Activated T-helper 1 cell treated with anti-CD3 and anti-CD28 coated beads, Interleukin-12 subunit alpha, Interleukin-12 subunit beta, Interleukin-2, Interleukin-4 antibody, amounts not matched to agents 30 ng/mL and 10 ng/mL and 1 ng/mL, durations not matched to agents 14 hours and 24 hours and 36 hours (primary cell): ENCODE measurements at regions of chr5 and their contacts with region 1.

Region 1: DNA sequence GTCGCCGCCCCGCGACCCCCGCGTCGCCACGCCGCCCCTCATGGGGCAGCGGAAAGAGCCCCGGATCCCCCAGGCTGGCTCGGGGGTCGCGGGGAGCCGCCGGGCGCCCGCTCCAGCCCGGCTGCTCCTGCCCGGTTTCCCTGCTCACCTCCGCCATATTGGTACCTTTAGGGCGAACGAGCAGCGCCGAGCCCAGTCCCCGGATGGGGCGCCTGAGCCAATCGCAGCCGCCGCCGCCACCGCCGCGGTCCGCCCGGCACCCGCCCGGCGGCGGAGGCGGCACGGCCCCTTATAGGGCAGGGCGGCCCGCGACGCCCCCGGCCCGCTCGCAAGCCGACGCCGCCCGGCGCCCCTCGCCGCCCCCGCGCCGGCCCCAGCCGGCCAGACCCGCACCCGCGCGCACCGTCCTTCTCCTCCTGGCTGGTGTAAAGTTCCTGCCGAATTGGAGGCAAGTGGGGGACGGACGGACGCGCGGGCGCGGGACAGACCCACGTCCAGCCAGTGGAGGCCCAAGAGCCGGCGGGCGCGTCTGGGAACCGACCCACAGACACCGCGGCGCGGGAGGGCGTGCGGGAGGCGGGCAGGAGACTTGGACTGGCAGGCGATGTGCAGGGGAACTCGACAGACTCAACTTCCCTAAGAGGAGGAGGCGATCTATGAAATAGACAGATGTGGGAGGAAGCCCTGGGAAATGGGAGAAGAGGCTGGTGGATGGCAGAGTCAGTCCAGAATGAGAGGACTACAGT is at the start of gene MIER3:
- DNase-seq: peak; percentile 82
- H3K4me3 Mint-ChIP-seq: peak within 1 kb of the TSS; percentile 95
- H3K27ac Mint-ChIP-seq: peak within 1 kb of the TSS; percentile 45
- H3K4me1 Mint-ChIP-seq: peaks cover 23% of the 10 kb centered on the region
- H3K27me3 Mint-ChIP-seq: peaks cover 24% of the 10 kb centered on the region
- total RNA-seq, gene MIER3: 33.6 and 35.9 TPM in 2 replicates

Region 2: GRCh38 chr5:56962286-56962685 is 10.2 kb after region 1 on chr5:
- intact Hi-C with region 1: no loop called
- DNase-seq: no peak
- H3K4me3 Mint-ChIP-seq: no peak overlapping the region
- H3K27ac Mint-ChIP-seq: no peak overlapping the region
- H3K4me1 Mint-ChIP-seq: no peaks in the 10 kb centered on the region
- H3K27me3 Mint-ChIP-seq: peaks cover 67% of the 10 kb centered on the region

Region 3: DNA sequence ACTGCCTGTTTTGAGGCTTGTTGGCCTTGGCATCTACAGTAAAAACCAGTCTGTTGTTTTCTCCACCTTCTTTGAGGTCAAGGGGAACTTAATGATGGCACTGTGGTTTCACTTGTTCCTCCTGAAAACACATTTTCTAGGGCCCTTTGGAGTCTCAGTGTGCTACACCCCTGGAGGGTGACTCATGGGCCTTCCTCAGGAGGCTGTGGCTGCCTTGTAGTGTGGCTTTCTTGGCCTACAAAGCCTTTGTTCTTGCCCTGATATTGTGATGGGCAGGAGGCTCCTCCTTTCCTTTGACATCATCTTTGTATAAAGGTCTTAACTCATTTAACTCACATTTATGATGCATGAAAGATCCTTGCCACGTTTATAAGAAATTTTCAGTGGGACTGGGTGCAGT is 165.5 kb after region 1 on chr5:
- intact Hi-C with region 1: loop called (anchors 5 kb)
- DNase-seq: peak; percentile 70
- H3K4me3 Mint-ChIP-seq: peak overlapping the region; percentile 54
- H3K27ac Mint-ChIP-seq: peak overlapping the region; percentile 81
- H3K4me1 Mint-ChIP-seq: peaks cover 23% of the 10 kb centered on the region
- H3K27me3 Mint-ChIP-seq: no peaks in the 10 kb centered on the region

Region 4: DNA sequence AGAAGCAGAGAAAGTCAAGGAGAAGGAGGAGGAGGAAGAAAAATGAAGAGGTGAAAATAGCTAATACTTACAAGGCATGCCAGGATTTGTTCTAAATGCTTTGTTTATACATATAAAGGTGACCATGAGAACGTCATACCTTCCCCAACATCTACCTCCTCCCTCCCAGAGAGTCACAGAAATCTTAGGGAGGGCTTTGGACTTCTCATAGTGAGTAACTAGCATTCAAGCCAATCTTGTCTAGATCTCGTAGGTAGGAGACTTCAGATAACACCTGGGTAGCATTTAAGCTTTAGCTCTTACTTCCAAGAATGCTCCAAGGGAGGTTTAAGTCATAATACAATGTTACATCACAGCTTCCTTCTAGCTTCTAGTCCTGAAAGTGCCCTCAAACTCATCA is 185.3 kb after region 1 on chr5:
- intact Hi-C with region 1: loop called (anchors 2 kb)
- DNase-seq: no peak
- H3K4me3 Mint-ChIP-seq: no peak overlapping the region
- H3K27ac Mint-ChIP-seq: no peak overlapping the region
- H3K4me1 Mint-ChIP-seq: no peaks in the 10 kb centered on the region
- H3K27me3 Mint-ChIP-seq: peaks cover 21% of the 10 kb centered on the region

Region 5: DNA sequence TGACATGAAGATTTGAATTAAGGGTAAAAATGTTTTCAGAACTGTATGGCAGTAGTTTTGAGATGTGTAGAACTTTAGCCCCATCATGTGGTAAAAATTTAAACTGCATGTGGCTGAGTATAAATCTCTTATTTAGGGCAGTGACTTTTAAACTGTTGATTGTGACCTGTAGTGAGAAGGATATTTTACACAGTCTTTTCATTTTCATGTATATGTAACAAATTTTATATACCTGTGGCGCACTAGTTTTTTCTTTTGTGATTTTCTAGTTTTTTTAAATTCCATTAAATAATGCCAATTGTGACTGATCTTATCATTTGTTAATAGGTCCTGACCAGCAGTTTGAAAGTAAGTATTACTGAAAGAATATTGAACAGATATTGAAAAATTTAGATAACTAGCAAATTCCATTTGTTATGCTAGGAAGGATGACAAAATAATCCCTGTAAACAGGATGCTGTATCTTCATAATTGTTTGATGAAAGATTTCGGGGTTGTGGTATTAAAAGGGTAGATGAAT is 269.0 kb after region 1 on chr5:
- intact Hi-C with region 1: loop called (anchors 1 kb)
- DNase-seq: peak; percentile 17
- H3K4me3 Mint-ChIP-seq: no peak overlapping the region
- H3K27ac Mint-ChIP-seq: no peak overlapping the region
- H3K4me1 Mint-ChIP-seq: peaks cover 18% of the 10 kb centered on the region
- H3K27me3 Mint-ChIP-seq: no peaks in the 10 kb centered on the region